Heart right ventricle (tissue), 16 donors: ENCODE measurements at regions of chr10 and their contacts with region 1.

Region 1: DNA sequence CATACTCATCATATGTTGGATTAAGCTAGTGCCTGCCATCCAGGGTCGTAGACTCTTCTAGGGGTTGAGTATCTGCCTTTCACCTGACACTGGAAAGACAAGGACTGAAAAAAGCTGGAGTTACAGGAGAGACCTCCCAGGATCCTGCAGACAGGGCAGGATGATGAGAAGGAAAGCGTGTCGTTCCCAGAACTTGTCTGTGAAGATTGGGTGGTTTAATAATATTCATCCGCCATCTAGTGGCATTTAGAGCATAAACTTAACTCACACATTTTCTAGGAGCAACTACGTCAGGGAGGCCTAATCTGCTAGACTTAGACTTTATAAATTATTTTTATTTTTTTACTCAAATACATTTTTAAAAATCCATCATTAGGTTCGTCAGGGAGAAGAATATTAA is 59.6 kb downstream of the ADRB1 start:
- DNase-seq: no peak
- ATAC-seq: peak; percentile 39 to 72 (median 64)
- H3K4me3 ChIP-seq: no peak overlapping the region
- H3K27ac ChIP-seq: no peak overlapping the region
- H3K4me1 ChIP-seq: peaks cover 0 to 27% (median 11%) of the 10 kb centered on the region in 9 donors
- H3K27me3 ChIP-seq: peaks cover 0 to 18% (median 0%) of the 10 kb centered on the region in 7 donors
- CTCF ChIP-seq: peak; percentile 13 to 75 (median 64)

Region 2: DNA sequence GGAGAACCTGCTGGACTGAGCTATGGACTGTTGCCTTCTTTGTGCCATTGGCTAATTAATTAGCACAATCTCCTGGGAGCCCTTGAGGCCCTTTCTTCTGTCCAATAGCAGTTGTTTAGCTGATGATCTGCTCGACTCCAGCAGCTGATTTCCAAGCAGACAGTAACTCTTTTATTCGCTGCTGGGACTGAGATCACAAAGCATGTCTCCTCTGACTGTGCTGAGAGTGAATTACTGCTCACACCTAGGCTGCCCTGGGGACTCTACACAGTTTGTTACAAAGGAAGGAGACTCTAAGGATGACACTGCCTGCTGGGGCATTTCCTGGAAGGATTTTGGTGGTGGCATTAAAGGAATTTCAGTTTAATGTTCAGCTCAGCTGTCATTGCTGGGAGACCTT is 392.1 kb before region 1 on chr10:
- intact Hi-C with region 1: loop called in 8 of 10 experiments (anchors 5 to 10 kb)
- DNase-seq: no peak
- ATAC-seq: no peak
- H3K4me3 ChIP-seq: no peak overlapping the region
- H3K27ac ChIP-seq: no peak overlapping the region
- H3K4me1 ChIP-seq: peaks cover 0 to 43% (median 25%) of the 10 kb centered on the region in 9 donors
- H3K27me3 ChIP-seq: no peaks in the 10 kb centered on the region
- CTCF ChIP-seq: no peak

Region 3: GRCh38 chr10:113854011-113854760 is 249.1 kb before region 1 on chr10 and contains the starts of genes DCLRE1A and NHLRC2:
- intact Hi-C with region 1: loop called in 2 of 10 experiments (anchors 5 kb)
- DNase-seq: peak; percentile 78 to 85
- ATAC-seq: peak; percentile 84 to 94 (median 88)
- H3K4me3 ChIP-seq: peak within 1 kb of the TSS; percentile 74 to 99 (median 90)
- H3K27ac ChIP-seq: peak within 1 kb of the TSS; percentile 81 to 97 (median 96)
- H3K4me1 ChIP-seq: peaks cover 0 to 66% (median 51%) of the 10 kb centered on the region in 9 donors
- H3K27me3 ChIP-seq: no peaks in the 10 kb centered on the region
- CTCF ChIP-seq: no peak
- total RNA-seq, gene DCLRE1A: 4.6 to 7.5 (median 5.7) TPM
- total RNA-seq, gene NHLRC2: 58.0 to 98.0 (median 72.0) TPM

Region 4: GRCh38 chr10:113897693-113898618 is 205.3 kb before region 1 on chr10:
- intact Hi-C with region 1: loop called in 3 of 10 experiments (anchors 10 kb)
- DNase-seq: peak; percentile 24 to 25
- ATAC-seq: peak in 7 of 8 donors; percentile 58 to 85 (median 77)
- H3K4me3 ChIP-seq: no peak overlapping the region
- H3K27ac ChIP-seq: peak overlapping the region in 6 of 10 donors; percentile 9 to 48 (median 18)
- H3K4me1 ChIP-seq: peaks cover 0 to 52% (median 20%) of the 10 kb centered on the region in 9 donors
- H3K27me3 ChIP-seq: no peaks in the 10 kb centered on the region
- CTCF ChIP-seq: no peak